Activated CD4-positive, alpha-beta T cell treated with anti-CD3 and anti-CD28 coated beads, Interleukin-2, amount 10 ng/mL, durations not matched to agents 24 days and 14 days (primary cell): ENCODE measurements at regions of chr4 and their contacts with region 1.

Region 1: GRCh38 chr4:55444827-55445226 is 49.1 kb downstream of the TMEM165 start:
- DNase-seq: no peak
- H3K4me3 Mint-ChIP-seq: no peak overlapping the region
- H3K27ac Mint-ChIP-seq: no peak overlapping the region
- H3K4me1 Mint-ChIP-seq: peaks cover 10% of the 10 kb centered on the region
- H3K27me3 Mint-ChIP-seq: no peaks in the 10 kb centered on the region

Region 2: DNA sequence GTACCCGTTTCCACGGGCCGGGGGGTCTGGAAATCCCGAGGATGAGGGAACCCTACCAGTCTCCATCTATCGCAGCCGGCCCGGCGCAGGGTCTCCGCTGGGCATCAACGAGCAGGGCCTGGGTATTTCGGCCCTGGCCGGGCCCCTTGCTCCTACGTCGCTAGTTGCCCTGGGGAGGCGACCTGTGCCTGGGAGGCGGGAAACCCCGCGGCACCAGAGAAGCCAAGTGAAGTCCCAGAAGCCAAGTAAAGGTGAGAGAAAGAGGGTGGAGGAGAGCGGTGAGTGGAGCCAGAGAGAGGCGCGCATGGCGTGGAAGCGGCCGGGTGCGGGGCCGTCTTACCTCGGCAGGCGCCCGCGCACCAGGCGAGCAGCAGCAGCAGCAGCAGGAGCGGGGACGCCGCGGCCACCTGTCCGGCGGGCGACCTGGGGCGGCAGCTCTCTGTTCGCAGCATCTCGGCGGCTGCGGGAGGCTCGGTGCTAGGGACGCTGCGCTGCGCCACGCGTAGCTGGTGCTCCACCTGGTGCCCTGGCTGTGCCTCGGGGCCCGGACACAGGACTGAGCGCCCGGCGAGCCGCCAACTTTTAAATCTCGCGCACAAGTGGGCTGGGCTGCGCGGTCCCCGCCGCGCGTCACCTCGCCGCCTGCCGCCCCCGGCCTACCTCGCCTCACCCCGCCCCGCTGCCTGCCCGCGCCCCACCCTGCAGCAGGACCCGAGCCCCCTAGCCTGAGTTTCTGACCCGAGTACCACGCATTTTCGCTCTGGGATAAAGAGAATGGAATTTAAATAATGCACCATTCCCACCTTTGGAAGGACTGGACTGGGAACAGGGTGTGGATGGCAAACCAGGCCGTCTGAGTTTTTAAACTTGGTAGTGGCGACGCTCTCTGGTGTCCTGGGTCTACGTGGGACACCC is 191.2 kb after region 1 on chr4 and contains the start of gene NMU:
- intact Hi-C with region 1: loop called (anchors 10 kb)
- DNase-seq: peak; percentile 69
- H3K4me3 Mint-ChIP-seq: peak within 1 kb of the TSS; percentile 76
- H3K27ac Mint-ChIP-seq: no peak within 1 kb of the TSS
- H3K4me1 Mint-ChIP-seq: peaks cover 9% of the 10 kb centered on the region
- H3K27me3 Mint-ChIP-seq: peaks cover 68% of the 10 kb centered on the region
- total RNA-seq, gene NMU: not detected in 2 replicates

Region 3: DNA sequence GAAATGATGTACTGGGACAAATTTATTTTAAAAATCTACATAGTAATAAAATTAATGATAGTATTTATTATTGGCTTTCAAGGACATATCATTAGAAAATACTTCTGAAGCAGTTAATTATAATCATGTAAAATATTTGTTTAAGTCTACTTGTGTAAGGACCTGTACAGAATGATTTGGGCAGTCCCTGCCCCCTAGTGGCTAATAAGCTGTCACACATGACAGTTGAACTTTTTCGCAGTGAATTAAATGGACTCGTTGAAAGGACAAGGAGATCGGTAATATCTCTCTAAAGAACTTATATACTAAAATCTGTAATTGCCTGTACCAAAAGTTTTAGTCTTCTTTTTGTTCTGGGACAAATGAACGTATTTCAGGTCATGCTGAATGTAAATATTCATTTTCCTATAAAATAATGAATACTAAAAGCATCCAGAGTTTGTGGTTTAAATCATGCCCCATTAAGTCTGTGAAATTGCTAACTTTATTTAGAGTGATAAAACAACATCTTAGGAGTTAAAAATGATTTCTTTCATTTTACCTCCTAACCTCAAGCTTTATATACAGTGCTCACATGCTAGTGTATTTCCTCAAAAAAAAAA is 422.2 kb after region 1 on chr4:
- intact Hi-C with region 1: loop called (anchors 5 kb)
- DNase-seq: peak; percentile 69
- H3K4me3 Mint-ChIP-seq: no peak overlapping the region
- H3K27ac Mint-ChIP-seq: no peak overlapping the region
- H3K4me1 Mint-ChIP-seq: peaks cover 19% of the 10 kb centered on the region
- H3K27me3 Mint-ChIP-seq: no peaks in the 10 kb centered on the region